ENCODE measurements at regions of chr15 and their contacts with region 1.

Region 1: GRCh38 chr15:89399238-89400120 is 64.9 kb upstream of the POLG start:
- DNase-seq: peak; percentile 54
- H3K4me3 ChIP-seq: peak overlapping the region; percentile 52
- H3K27ac ChIP-seq: no peak overlapping the region
- H3K4me1 ChIP-seq: peaks cover 4% of the 10 kb centered on the region
- H3K27me3 ChIP-seq: no peaks in the 10 kb centered on the region
- CTCF ChIP-seq: peak; percentile 64

Region 2: GRCh38 chr15:89293012-89293411 is 106.5 kb before region 1 on chr15:
- CTCF ChIA-PET with region 1: interaction called, 12 read pairs
- POLR2A ChIA-PET with region 1: no interaction called
- intact Hi-C with region 1: no loop called
- DNase-seq: peak; percentile 6
- H3K4me3 ChIP-seq: no peak overlapping the region
- H3K27ac ChIP-seq: no peak overlapping the region
- H3K4me1 ChIP-seq: no peaks in the 10 kb centered on the region
- H3K27me3 ChIP-seq: no peaks in the 10 kb centered on the region
- CTCF ChIP-seq: peak; percentile 21; the same call in 1 of the 2 replicates

Region 3: DNA sequence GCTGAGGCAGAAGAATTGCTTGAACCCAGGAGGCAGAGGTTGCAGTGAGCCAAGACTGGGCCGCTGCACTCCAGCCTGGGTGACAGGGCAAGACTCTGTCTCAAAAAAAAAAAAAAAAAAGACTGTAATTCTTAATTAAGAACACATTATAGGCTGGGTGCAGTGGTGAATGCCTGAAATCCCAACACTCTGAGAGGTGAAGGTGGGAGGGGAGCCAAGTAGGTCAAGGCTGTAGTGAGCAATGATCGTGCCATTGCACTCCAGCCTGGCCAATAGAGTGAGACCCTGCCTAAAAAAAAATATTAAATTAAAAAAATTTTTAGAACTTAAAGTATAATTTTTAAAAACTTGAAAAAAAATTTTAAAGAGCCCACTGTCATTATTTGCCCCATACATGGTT is 526.7 kb after region 1 on chr15:
- CTCF ChIA-PET with region 1: no interaction called
- POLR2A ChIA-PET with region 1: no interaction called
- intact Hi-C with region 1: no loop called
- DNase-seq: no peak
- H3K4me3 ChIP-seq: no peak overlapping the region
- H3K27ac ChIP-seq: no peak overlapping the region
- H3K4me1 ChIP-seq: no peaks in the 10 kb centered on the region
- H3K27me3 ChIP-seq: no peaks in the 10 kb centered on the region
- CTCF ChIP-seq: no peak

Measured in A673 (cell line).